ENCODE measurements at regions of chr20 and their contacts with region 1.

Region 1: GRCh38 chr20:41078329-41078728 is 49.7 kb downstream of the TOP1 start:
- DNase-seq: no peak
- H3K4me3 ChIP-seq: peak overlapping the region in 1 of 2 donors; percentile 22
- H3K27ac ChIP-seq: peak overlapping the region in 1 of 2 donors; percentile 29
- H3K4me1 ChIP-seq: peaks cover 0 to 34% of the 10 kb centered on the region in 2 donors
- H3K27me3 ChIP-seq: no peaks in the 10 kb centered on the region
- CTCF ChIP-seq: peak; percentile 40 to 62 (median 50)

Region 2: DNA sequence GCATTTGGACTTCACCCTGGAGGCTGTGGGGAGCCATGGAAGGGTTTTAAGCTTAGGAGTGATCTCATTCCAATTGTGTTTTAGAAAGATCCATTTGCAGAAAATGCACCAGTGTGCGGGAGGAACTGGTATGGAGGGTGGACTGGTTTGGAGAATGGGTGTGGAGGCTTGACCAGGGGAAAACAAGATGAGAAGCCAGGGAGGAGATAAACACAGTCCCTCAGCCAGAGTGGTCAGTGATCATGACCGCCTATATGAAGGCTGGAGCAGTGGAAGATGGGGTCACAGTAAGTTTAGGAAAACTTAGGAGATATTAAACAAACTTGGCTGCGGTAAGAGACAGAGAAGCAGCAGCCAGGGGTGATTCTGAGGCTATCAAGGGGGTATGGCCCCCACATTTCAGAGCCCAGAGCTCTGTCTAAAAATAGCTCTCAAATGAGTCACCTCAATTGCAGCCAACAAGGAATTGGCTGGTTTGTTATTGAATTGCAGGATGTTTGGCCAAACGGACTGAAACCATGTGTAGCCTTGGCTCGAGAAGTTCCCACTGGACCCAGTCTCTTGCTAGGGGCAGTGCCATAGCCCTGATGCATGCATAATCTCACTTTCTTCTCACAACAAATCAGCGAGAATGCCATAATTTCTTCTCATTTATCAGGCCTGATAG is 209.6 kb before region 1 on chr20:
- intact Hi-C with region 1: loop called (anchors 10 kb)
- DNase-seq: peak; percentile 29 to 77
- H3K4me3 ChIP-seq: no peak overlapping the region
- H3K27ac ChIP-seq: peak overlapping the region in 1 of 2 donors; percentile 72
- H3K4me1 ChIP-seq: peaks cover 6 to 16% of the 10 kb centered on the region in 2 donors
- H3K27me3 ChIP-seq: no peaks in the 10 kb centered on the region
- CTCF ChIP-seq: no peak

Region 3: DNA sequence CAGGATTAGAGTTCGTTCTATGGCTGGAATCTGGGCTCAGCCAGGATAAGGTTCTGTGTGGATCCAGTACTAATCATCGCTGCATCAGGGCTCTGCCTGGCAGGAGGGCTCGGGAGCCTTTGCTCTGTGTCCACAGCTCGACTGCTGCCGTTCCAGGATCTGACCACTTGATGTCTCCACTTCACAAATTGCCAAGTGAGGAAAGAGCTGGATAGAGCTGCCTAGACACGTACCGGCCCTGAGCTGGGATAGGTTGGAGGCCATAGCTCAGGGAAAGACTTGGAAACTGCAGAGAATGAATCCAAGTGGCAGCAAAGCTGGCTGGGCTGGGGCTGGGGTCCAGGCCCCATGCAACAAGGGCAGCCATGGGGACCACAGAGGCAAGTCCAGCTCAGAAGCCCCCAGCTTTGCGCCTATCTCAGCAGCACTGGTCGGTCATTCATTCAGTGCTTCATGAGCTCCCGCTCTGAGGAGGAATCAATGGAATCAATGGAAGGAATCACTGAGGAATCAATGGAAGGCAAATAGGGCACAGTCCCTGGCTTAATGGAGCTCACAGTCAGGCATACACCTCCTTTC is 87.7 kb before region 1 on chr20:
- intact Hi-C with region 1: loop called (anchors 5 kb)
- DNase-seq: peak in 1 of 2 donors; percentile 89
- H3K4me3 ChIP-seq: no peak overlapping the region
- H3K27ac ChIP-seq: no peak overlapping the region
- H3K4me1 ChIP-seq: no peaks in the 10 kb centered on the region
- H3K27me3 ChIP-seq: no peaks in the 10 kb centered on the region
- CTCF ChIP-seq: peak; percentile 78 to 85 (median 80)

Measured in ascending aorta (tissue), 2 donors.